PC-9 (cell line): ENCODE measurements at regions of chr4 and their contacts with region 1.

Region 1: DNA sequence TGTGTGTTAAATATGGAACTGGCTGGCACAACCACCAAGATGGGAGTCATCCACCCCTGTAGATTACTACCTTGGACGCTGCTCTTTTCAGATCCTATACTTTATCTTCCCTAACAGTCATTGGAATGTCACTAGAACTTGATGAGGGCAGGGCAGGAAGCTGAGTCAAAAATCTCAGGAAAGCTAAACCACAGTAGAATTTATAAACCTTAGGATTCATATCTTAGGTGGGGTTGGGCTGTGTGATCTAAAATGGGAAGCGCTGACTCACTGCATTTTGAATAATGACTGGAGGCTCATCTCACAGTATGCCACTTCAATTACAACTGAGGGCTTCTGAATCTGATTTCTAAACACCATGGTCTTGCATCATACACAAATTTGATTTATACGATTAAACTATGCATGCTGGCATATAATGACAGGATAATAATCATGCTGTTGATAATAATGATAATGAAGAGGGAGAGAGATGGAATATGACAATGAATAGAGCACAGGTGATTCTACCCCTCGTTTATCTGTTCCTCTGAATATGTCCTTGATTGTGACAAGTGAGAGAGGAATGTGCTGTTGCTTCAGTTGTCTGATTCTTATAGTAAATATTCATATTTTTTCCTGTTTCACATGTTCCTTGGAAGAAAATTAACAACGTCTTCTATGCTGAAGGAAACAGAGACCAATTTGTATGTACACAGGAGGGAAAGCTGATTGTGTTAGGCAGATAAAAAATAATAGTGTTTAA is 270.3 kb upstream of the HS3ST1 start:
- DNase-seq: peak; percentile 61 to 91
- H3K4me3 ChIP-seq: 0 out of 2 replicates have a peak overlapping the region, but pooled peaks have one; percentile 12
- H3K27ac ChIP-seq: peak overlapping the region; percentile 99
- H3K4me1 ChIP-seq: peaks cover 52% of the 10 kb centered on the region
- H3K27me3 ChIP-seq: no peaks in the 10 kb centered on the region
- CTCF ChIP-seq: no peak

Region 2: GRCh38 chr4:11505221-11505971 is 193.6 kb before region 1 on chr4:
- CTCF ChIA-PET with region 1: no interaction called
- POLR2A ChIA-PET with region 1: no interaction called
- intact Hi-C with region 1: loop called (anchors 1 kb)
- DNase-seq: peak; percentile 71 to 98
- H3K4me3 ChIP-seq: no peak overlapping the region
- H3K27ac ChIP-seq: peak overlapping the region; percentile 92
- H3K4me1 ChIP-seq: peaks cover 31% of the 10 kb centered on the region
- H3K27me3 ChIP-seq: no peaks in the 10 kb centered on the region
- CTCF ChIP-seq: no peak

Region 3: DNA sequence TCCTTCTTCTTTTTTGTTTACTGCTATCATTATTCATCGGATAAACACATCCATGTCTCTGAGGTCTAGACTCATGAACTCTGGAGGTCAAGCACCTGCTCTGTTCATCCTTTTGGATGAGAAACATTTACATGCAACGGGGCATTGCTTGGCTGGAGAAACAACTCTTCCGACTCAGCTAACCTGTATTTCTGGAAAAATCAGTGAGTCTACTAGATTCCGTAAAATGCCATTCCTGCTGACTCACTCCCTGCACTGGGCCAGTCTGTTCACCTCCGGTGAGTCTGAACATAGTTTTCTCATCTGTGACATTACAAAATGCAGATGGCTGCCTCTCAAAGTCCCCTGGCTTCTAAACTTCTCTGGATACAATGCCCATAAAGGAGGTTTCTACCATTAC is 84.6 kb before region 1 on chr4:
- CTCF ChIA-PET with region 1: no interaction called
- POLR2A ChIA-PET with region 1: interaction called, 5 read pairs
- intact Hi-C with region 1: loop called (anchors 1 kb)
- DNase-seq: peak; percentile 80 to 96
- H3K4me3 ChIP-seq: peak overlapping the region; percentile 46
- H3K27ac ChIP-seq: peak overlapping the region; percentile 98
- H3K4me1 ChIP-seq: peaks cover 48% of the 10 kb centered on the region
- H3K27me3 ChIP-seq: no peaks in the 10 kb centered on the region
- CTCF ChIP-seq: no peak

Region 4: GRCh38 chr4:11669156-11669555 is 29.9 kb before region 1 on chr4:
- CTCF ChIA-PET with region 1: interaction called, 4 read pairs
- POLR2A ChIA-PET with region 1: no interaction called
- intact Hi-C with region 1: loop called (anchors 2 kb)
- DNase-seq: peak in 1 of 2 experiments; percentile 69
- H3K4me3 ChIP-seq: no peak overlapping the region
- H3K27ac ChIP-seq: peak overlapping the region; percentile 43
- H3K4me1 ChIP-seq: no peaks in the 10 kb centered on the region
- H3K27me3 ChIP-seq: no peaks in the 10 kb centered on the region
- CTCF ChIP-seq: no peak

Region 5: GRCh38 chr4:11741190-11741652 is 42.2 kb after region 1 on chr4:
- CTCF ChIA-PET with region 1: no interaction called
- POLR2A ChIA-PET with region 1: no interaction called
- intact Hi-C with region 1: loop called (anchors 2 kb)
- DNase-seq: peak in 1 of 2 experiments; percentile 64
- H3K4me3 ChIP-seq: no peak overlapping the region
- H3K27ac ChIP-seq: 0 out of 2 replicates have a peak overlapping the region, but pooled peaks have one; percentile 27
- H3K4me1 ChIP-seq: peaks cover 13% of the 10 kb centered on the region; the same call in 1 of the 2 replicates
- H3K27me3 ChIP-seq: no peaks in the 10 kb centered on the region
- CTCF ChIP-seq: no peak

Region 6: GRCh38 chr4:11904117-11904535 is 205.1 kb after region 1 on chr4:
- CTCF ChIA-PET with region 1: no interaction called
- POLR2A ChIA-PET with region 1: no interaction called
- intact Hi-C with region 1: no loop called
- DNase-seq: no peak
- H3K4me3 ChIP-seq: no peak overlapping the region
- H3K27ac ChIP-seq: no peak overlapping the region
- H3K4me1 ChIP-seq: no peaks in the 10 kb centered on the region
- H3K27me3 ChIP-seq: no peaks in the 10 kb centered on the region
- CTCF ChIP-seq: no peak